Right cardiac atrium (tissue), 5 donors: ENCODE measurements at regions of chr4 and their contacts with region 1.

Region 1: GRCh38 chr4:87026800-87027495 is 92.1 kb downstream of the AFF1 start:
- DNase-seq: no peak
- ATAC-seq: peak in 1 of 2 donors; percentile 9
- H3K4me3 ChIP-seq: no peak overlapping the region
- H3K27ac ChIP-seq: peak overlapping the region; percentile 6
- H3K4me1 ChIP-seq: peaks cover 30% of the 10 kb centered on the region
- H3K27me3 ChIP-seq: no peaks in the 10 kb centered on the region

Region 2: GRCh38 chr4:87073199-87074120 is 46.5 kb after region 1 on chr4:
- intact Hi-C with region 1: loop called in 1 of 4 experiments (anchors 10 kb)
- DNase-seq: peak in 2 of 3 donors; percentile 68 to 76
- ATAC-seq: peak; percentile 67 to 71
- H3K4me3 ChIP-seq: no peak overlapping the region
- H3K27ac ChIP-seq: no peak overlapping the region
- H3K4me1 ChIP-seq: peaks cover 7% of the 10 kb centered on the region
- H3K27me3 ChIP-seq: no peaks in the 10 kb centered on the region